CD8-positive, alpha-beta T cell (primary cell): ENCODE measurements at regions of chr9 and their contacts with region 1.

Region 1: GRCh38 chr9:7433508-7434292 is 365.9 kb downstream of the DMAC1 start:
- DNase-seq: no peak
- ATAC-seq: no peak
- H3K4me3 ChIP-seq: no peak overlapping the region
- H3K4me3 Mint-ChIP-seq: no peak overlapping the region
- H3K27ac ChIP-seq: no peak overlapping the region
- H3K27ac Mint-ChIP-seq: no peak overlapping the region
- H3K4me1 ChIP-seq: no peaks in the 10 kb centered on the region
- H3K4me1 Mint-ChIP-seq: no peaks in the 10 kb centered on the region
- H3K27me3 ChIP-seq: no peaks in the 10 kb centered on the region
- H3K27me3 Mint-ChIP-seq: peaks cover 6% of the 10 kb centered on the region
- CTCF ChIP-seq: no peak

Region 2: GRCh38 chr9:7347556-7347955 is 86.1 kb before region 1 on chr9:
- CTCF ChIA-PET with region 1: no interaction called
- POLR2A ChIA-PET with region 1: no interaction called
- intact Hi-C with region 1: no loop called
- DNase-seq: no peak
- ATAC-seq: no peak
- H3K4me3 ChIP-seq: no peak overlapping the region
- H3K4me3 Mint-ChIP-seq: no peak overlapping the region
- H3K27ac ChIP-seq: no peak overlapping the region
- H3K27ac Mint-ChIP-seq: no peak overlapping the region
- H3K4me1 ChIP-seq: no peaks in the 10 kb centered on the region
- H3K4me1 Mint-ChIP-seq: no peaks in the 10 kb centered on the region
- H3K27me3 ChIP-seq: no peaks in the 10 kb centered on the region
- H3K27me3 Mint-ChIP-seq: no peaks in the 10 kb centered on the region
- CTCF ChIP-seq: no peak

Region 3: DNA sequence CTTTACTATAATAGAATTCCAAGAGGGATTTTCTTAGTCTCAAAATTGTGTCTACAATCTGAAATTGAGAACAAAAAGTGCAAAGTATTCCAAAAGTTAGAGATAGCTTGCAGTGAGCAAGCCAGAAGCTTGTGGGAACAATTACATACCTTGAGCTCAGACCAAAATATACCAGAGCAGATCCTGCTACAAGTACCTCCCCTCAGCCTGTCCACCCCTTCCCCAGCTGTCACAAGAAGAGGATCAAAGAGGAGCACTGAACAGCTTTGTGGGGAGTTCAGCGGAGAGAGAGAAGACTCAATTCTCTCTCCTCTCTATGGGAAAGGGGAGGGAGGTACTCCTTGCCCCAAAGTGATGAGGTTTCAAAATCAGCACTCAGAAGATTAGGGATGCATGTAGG is 1235.1 kb after region 1 on chr9:
- CTCF ChIA-PET with region 1: no interaction called
- POLR2A ChIA-PET with region 1: no interaction called
- intact Hi-C with region 1: loop called in 1 of 2 experiments (anchors 5 kb)
- DNase-seq: no peak
- ATAC-seq: no peak
- H3K4me3 ChIP-seq: no peak overlapping the region
- H3K4me3 Mint-ChIP-seq: no peak overlapping the region
- H3K27ac ChIP-seq: no peak overlapping the region
- H3K27ac Mint-ChIP-seq: no peak overlapping the region
- H3K4me1 ChIP-seq: no peaks in the 10 kb centered on the region
- H3K4me1 Mint-ChIP-seq: no peaks in the 10 kb centered on the region
- H3K27me3 ChIP-seq: no peaks in the 10 kb centered on the region
- H3K27me3 Mint-ChIP-seq: no peaks in the 10 kb centered on the region
- CTCF ChIP-seq: no peak